ENCODE measurements at regions of chr1 and their contacts with region 1.

Region 1: GRCh38 chr1:179853102-179853501 is 24.5 kb downstream of the TOR1AIP2 start:
- DNase-seq: no peak
- H3K4me3 ChIP-seq: no peak overlapping the region
- CTCF ChIP-seq: no peak

Region 2: DNA sequence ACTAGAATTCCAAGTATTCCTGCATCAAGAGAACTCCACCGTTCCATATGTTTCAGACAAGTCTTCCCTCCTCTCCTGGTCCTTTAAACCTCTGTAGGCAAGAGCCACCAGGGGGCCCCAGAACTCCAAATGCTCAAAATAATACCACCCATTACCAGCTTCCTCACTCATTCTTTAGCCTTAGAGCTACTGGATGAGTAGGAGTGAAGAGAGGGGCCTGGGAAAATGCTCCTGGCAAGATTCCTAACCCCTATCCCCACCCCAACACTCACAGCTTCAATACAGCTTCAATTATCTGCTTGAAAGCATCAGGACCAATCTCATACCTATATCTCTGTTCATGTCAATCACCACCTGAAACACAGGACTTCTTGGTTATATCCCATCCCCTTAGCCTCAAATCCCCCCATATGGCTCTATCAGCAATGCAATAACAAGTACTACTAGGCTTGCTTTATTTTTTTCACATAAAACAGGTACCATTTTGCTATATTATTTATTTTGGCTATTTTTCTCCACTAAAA is 14.8 kb after region 1 on chr1:
- CTCF ChIA-PET with region 1: interaction called, 16 read pairs
- POLR2A ChIA-PET with region 1: interaction called, 3 read pairs
- DNase-seq: no peak
- H3K4me3 ChIP-seq: no peak overlapping the region
- CTCF ChIP-seq: peak; percentile 64

Region 3: DNA sequence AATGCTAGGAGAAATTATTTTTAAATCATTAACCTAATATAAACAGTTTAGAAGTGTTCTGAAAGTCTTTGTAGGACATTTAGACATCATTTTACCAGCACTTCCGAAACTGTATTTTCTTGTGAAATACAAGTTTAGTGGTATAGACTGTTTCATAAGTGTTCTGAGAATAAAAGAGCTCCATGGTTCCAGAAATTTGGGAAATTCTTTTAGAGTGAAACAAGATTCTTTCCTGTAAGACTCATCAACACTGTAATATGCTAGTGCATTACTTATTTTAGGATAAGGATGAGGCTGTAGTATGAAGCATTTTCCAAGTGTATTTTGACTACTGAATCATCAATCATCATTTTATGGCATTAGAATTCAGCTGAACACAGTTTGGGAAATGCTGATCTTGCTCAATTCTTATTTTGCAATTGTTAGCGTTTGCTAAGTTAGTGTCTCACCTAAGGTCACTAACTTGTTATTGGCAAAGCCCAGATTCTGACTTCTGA is 174.9 kb after region 1 on chr1:
- CTCF ChIA-PET with region 1: no interaction called
- POLR2A ChIA-PET with region 1: no interaction called
- DNase-seq: peak; percentile 65
- H3K4me3 ChIP-seq: no peak overlapping the region
- CTCF ChIP-seq: no peak